ENCODE measurements at regions of chr6 and their contacts with region 1.

Region 1: DNA sequence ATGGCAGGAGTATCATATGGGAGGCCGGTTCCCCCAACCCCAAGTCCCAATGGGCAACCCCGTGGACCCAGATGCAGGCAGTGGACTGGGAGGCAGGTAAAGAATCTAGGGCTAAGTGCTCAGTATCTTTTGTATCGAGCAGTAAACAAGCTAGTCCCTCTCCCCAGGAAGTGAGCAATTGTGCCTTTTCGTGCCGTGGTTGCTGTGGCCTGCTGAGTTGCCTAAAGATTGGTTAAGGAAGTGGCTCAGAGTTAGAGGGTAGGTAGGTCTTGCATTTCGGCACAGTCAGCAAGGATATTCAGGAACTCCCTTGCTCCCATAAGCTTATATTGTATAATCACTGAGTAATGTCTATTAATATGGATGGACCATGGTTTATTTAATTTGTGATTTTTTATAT is 1.3 kb upstream of the DNAH8 start:
- DNase-seq: peak; percentile 43
- H3K4me3 ChIP-seq: no peak overlapping the region
- H3K27ac ChIP-seq: no peak overlapping the region
- H3K4me1 ChIP-seq: peaks cover 22% of the 10 kb centered on the region
- H3K27me3 ChIP-seq: no peaks in the 10 kb centered on the region
- CTCF ChIP-seq: no peak
- POLR2A ChIP-seq: no peak

Region 2: GRCh38 chr6:38603966-38604365 is 109.8 kb before region 1 on chr6:
- CTCF ChIA-PET with region 1: no interaction called
- POLR2A ChIA-PET with region 1: no interaction called
- dilution Hi-C with region 1: no loop called
- intact Hi-C with region 1: no loop called
- DNase-seq: no peak
- H3K4me3 ChIP-seq: no peak overlapping the region
- H3K27ac ChIP-seq: no peak overlapping the region
- H3K4me1 ChIP-seq: no peaks in the 10 kb centered on the region
- H3K27me3 ChIP-seq: no peaks in the 10 kb centered on the region
- CTCF ChIP-seq: no peak
- POLR2A ChIP-seq: no peak

Region 3: GRCh38 chr6:38725414-38726183 is 11.8 kb after region 1 on chr6:
- CTCF ChIA-PET with region 1: interaction called, 11 read pairs
- POLR2A ChIA-PET with region 1: no interaction called
- dilution Hi-C with region 1: no loop called
- intact Hi-C with region 1: no loop called
- DNase-seq: no peak
- H3K4me3 ChIP-seq: no peak overlapping the region
- H3K27ac ChIP-seq: no peak overlapping the region
- H3K4me1 ChIP-seq: peaks cover 11% of the 10 kb centered on the region
- H3K27me3 ChIP-seq: no peaks in the 10 kb centered on the region
- CTCF ChIP-seq: no peak
- POLR2A ChIP-seq: no peak